Activated CD4-positive, alpha-beta T cell treated with anti-CD3 and anti-CD28 coated beads, Interleukin-2, amount 10 ng/mL, durations not matched to agents 24 days and 14 days (primary cell): ENCODE measurements at regions of chr2 and their contacts with region 1.

Region 1: GRCh38 chr2:12931186-12931844 is 214.6 kb downstream of the TRIB2 start:
- DNase-seq: peak; percentile 61
- H3K4me3 Mint-ChIP-seq: no peak overlapping the region
- H3K27ac Mint-ChIP-seq: no peak overlapping the region
- H3K4me1 Mint-ChIP-seq: peaks cover 11% of the 10 kb centered on the region
- H3K27me3 Mint-ChIP-seq: peaks cover 49% of the 10 kb centered on the region

Region 2: DNA sequence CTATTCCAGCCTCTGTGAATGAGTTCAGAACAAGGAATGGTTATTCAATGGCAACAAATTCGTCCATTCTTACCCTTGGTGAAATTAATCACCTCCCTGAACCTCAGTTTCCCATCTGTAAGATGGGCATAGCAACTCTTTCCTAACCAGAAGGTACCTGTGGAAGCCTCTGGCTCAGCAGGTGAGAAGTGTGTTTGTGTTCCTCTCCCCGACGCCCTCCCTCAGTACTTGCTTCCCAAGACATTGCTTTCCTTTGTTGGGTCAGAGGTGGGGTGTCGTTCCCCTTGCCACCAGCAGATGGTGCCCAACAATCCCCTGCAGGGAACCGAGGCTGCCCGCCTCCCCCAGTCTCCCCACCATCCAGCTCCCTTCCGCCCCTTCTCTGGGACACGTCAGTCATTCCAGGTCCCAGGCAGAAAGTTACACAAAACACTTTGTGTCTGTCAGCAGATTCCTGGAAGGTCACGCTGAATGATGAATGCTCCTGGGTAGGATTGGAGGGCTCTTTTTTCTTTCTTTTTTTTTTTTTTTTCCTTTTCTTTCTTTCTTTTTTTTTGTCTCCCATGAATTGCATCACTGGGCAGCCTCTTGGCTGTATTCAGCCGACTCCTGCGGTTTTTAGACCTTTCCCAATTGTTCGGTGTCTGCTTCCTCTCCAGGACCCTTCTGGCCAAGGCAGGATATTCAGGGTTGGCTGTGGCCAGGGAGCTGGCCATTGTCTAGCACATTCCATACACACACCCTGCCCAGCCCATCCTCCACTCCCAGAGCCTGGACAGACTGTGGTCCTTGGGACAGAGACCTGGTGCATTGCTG is 1067.6 kb before region 1 on chr2:
- intact Hi-C with region 1: loop called (anchors 2 kb)
- DNase-seq: peak; percentile 89
- H3K4me3 Mint-ChIP-seq: no peak overlapping the region
- H3K27ac Mint-ChIP-seq: no peak overlapping the region
- H3K4me1 Mint-ChIP-seq: peaks cover 9% of the 10 kb centered on the region
- H3K27me3 Mint-ChIP-seq: peaks cover 17% of the 10 kb centered on the region